IMR-90 (cell line): ENCODE measurements at regions of chr1 and their contacts with region 1.

Region 1: DNA sequence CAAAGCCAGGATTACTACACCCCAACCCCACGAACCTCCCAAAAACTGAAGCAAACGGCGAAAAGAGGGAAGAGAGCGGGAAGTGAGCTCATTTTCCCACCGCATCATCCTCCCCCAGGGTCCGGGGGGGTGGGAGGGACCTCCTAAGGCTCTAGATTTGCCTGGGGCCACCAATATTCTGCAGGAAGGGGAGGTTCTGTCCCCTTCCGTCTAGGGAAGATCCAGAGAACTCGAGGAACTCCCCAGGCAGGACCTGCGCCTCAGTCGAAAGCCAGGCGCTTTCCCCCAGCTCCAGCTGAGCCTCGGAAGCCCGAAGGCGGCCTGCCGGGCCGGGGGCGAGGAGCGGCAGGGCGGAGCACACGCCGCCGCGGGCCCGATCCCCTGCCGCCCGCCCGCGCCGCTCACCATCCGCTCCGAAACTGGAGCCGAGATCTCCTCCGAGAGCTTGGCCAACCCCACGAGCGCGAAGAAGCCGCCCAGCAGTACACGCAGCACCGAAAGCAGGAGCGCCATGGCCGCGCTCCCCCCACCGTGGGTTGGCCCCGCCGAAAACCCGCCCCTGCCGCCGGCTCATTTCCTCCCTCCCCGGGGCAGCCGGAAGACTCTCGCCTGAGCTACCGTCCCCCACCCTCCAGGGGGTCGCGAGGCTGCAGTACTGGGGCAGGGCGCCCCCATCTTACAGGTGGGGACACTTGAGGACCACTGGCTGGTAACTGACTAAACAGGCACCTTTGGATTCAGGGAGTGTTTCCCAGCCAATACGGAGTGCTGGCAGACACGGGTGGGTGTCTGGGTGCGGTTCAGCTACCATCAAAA is at the start of gene TMEM35B:
- DNase-seq: peak; percentile 41
- ATAC-seq: peak; percentile 91
- H3K4me3 ChIP-seq: peak within 1 kb of the TSS; percentile 68
- H3K27ac ChIP-seq: peak within 1 kb of the TSS; percentile 92
- H3K4me1 ChIP-seq: peaks cover 10% of the 10 kb centered on the region
- H3K27me3 ChIP-seq: no peaks in the 10 kb centered on the region
- CTCF ChIP-seq: 0 out of 2 replicates have a peak, but pooled peaks have one; percentile 4
- POLR2A ChIP-seq: peak; percentile 59
- RAD21 ChIP-seq: no peak
- total RNA-seq, gene TMEM35B: 19.7 and 20.0 TPM in 2 replicates

Region 2: GRCh38 chr1:34859446-34860200 is 125.4 kb before region 1 on chr1 and contains the start of gene SMIM12:
- CTCF ChIA-PET with region 1: no interaction called
- POLR2A ChIA-PET with region 1: no interaction called
- dilution Hi-C with region 1: no loop called
- in situ Hi-C with region 1: no loop called
- intact Hi-C with region 1: loop called (anchors 2 kb)
- DNase-seq: peak; percentile 90
- ATAC-seq: peak; percentile 100
- H3K4me3 ChIP-seq: peak within 1 kb of the TSS; percentile 89
- H3K27ac ChIP-seq: peak within 1 kb of the TSS; percentile 57
- H3K4me1 ChIP-seq: no peaks in the 10 kb centered on the region; the same call in 1 of the 2 replicates
- H3K27me3 ChIP-seq: peaks cover 6% of the 10 kb centered on the region; the same call in 1 of the 2 replicates
- CTCF ChIP-seq: peak; percentile 92
- POLR2A ChIP-seq: peak; percentile 89
- RAD21 ChIP-seq: no peak; the same call in 1 of the 2 replicates
- total RNA-seq, gene SMIM12: 31.9 and 36.4 TPM in 2 replicates

Region 3: DNA sequence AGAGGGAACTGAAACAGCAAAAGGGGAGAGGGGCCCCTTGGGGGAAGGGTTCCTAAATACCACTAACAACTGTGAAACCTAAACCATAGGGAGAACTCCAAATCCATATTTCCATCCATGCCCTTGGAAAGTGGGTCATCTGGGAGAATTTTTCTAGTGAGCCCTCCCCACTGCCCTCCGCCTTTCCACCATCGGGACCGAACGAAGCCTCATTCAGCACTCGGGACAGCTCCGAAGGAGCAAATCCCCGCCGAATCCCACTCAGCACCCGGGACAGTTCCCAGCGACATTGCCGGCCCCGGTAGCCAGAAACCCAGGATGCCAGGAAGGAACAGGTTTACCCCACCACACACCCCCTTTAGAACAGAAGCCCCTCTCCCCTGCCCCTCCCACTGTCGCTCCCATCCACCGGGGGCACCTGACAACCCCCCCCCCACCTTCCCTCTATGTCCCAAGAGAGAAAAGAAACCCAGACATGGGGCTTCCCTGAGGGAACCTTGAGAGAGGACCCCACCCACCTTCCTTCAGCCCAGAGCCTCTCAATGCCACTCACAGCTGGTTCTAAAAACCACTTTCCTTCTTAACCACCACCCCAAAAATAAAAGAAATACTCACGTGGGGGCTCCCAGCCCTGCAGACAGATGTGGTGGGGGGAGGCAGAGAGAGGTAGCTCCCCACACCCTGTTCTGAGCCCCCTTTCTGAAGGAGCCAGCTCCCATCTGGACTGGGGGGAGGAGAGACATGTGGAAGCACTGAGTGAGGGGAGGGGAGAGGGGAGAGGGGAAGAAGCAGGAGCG is 60.0 kb before region 1 on chr1:
- CTCF ChIA-PET with region 1: no interaction called
- POLR2A ChIA-PET with region 1: no interaction called
- dilution Hi-C with region 1: no loop called
- in situ Hi-C with region 1: no loop called
- intact Hi-C with region 1: loop called (anchors 2 kb)
- DNase-seq: peak; percentile 52
- ATAC-seq: peak; percentile 90
- H3K4me3 ChIP-seq: no peak overlapping the region
- H3K27ac ChIP-seq: no peak overlapping the region
- H3K4me1 ChIP-seq: peaks cover 3% of the 10 kb centered on the region; the same call in 1 of the 2 replicates
- H3K27me3 ChIP-seq: peaks cover 37% of the 10 kb centered on the region
- CTCF ChIP-seq: no peak
- POLR2A ChIP-seq: no peak
- RAD21 ChIP-seq: no peak

Region 4: GRCh38 chr1:35173909-35174540 is 189.0 kb after region 1 on chr1:
- CTCF ChIA-PET with region 1: no interaction called
- POLR2A ChIA-PET with region 1: no interaction called
- dilution Hi-C with region 1: no loop called
- in situ Hi-C with region 1: no loop called
- intact Hi-C with region 1: loop called (anchors 10 kb)
- DNase-seq: no peak
- ATAC-seq: peak; percentile 9; the same call in 1 of the 2 replicates
- H3K4me3 ChIP-seq: no peak overlapping the region
- H3K27ac ChIP-seq: no peak overlapping the region
- H3K4me1 ChIP-seq: no peaks in the 10 kb centered on the region
- H3K27me3 ChIP-seq: no peaks in the 10 kb centered on the region
- CTCF ChIP-seq: no peak
- POLR2A ChIP-seq: no peak; the same call in none of the 2 replicates
- RAD21 ChIP-seq: no peak